AG04449 (cell line): ENCODE measurements at regions of chr11 and their contacts with region 1.

Region 1: GRCh38 chr11:8006349-8006977 is 19.3 kb downstream of the EIF3F start:
- DNase-seq: peak; percentile 21
- H3K4me3 ChIP-seq: no peak overlapping the region
- CTCF ChIP-seq: peak; percentile 89

Region 2: DNA sequence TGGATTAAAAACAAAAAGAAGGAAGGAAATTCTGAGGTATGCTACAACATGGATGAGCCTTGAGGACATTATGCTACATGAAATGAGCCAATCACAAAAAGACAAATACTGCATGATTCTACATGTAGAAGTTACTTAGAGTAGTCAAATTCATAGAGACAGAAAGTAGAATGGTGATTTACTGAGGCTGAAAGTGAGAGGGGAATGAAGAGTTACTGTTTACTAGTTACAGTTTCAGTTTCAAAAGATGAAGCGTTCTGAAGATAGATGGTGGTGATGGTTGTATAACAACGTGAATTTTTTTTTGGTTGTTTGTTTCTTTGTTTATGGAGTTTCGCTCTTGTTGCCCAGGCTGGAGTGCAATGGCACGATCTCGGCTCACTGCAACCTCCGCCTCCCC is 219.2 kb before region 1 on chr11:
- CTCF ChIA-PET with region 1: no interaction called
- POLR2A ChIA-PET with region 1: no interaction called
- DNase-seq: no peak
- H3K4me3 ChIP-seq: no peak overlapping the region
- CTCF ChIP-seq: no peak

Region 3: GRCh38 chr11:7904914-7905313 is 101.5 kb before region 1 on chr11:
- CTCF ChIA-PET with region 1: interaction called, 21 read pairs
- POLR2A ChIA-PET with region 1: no interaction called
- DNase-seq: no peak
- H3K4me3 ChIP-seq: no peak overlapping the region
- CTCF ChIP-seq: peak; percentile 28

Region 4: DNA sequence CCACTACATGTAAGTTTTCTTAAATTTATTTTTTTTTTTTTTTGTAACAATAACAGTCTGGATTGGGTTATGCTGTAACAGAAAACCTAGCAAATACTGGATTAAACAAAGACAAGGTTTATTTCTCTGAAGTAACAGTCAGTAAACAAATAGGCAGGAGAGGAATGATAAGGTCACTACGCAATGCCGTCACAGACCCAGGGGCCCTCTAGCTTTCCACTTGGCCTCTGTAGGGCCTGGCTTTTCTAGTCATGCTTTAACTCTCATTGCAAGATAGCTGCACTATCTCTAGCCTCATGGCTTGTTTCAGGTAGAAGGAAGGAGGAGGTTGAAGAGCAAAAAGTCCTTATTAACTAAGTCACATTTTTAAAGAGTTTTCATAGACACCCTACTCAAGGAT is 81.9 kb before region 1 on chr11:
- CTCF ChIA-PET with region 1: no interaction called
- POLR2A ChIA-PET with region 1: no interaction called
- DNase-seq: no peak
- H3K4me3 ChIP-seq: no peak overlapping the region
- CTCF ChIP-seq: no peak

Region 5: GRCh38 chr11:8025816-8026215 is 19.4 kb after region 1 on chr11:
- CTCF ChIA-PET with region 1: interaction called, 20 read pairs
- POLR2A ChIA-PET with region 1: no interaction called
- DNase-seq: peak; percentile 64
- H3K4me3 ChIP-seq: no peak overlapping the region
- CTCF ChIP-seq: no peak

Region 6: GRCh38 chr11:8070417-8071115 is 64.1 kb after region 1 on chr11:
- CTCF ChIA-PET with region 1: interaction called, 17 read pairs
- POLR2A ChIA-PET with region 1: interaction called, 3 read pairs
- DNase-seq: no peak
- H3K4me3 ChIP-seq: no peak overlapping the region
- CTCF ChIP-seq: peak; percentile 23

Region 7: DNA sequence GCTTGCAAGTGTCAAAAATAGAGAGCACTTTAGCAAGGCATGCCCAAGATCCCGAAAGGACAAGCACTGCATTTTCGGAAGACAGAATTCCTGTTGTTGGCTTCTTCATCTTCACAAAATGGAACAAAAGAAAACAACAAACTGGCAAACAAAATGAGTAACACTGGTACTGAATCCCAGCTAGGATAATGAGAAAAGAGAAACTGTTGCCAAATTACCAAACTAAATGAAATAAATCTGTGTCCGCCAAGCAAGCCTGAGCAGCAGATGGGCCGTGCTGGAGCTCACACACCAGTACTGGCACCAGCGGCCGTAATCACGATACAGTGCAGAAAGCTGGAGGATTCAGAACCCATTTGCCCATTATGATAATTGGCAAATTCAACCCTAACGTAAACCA is 105.2 kb after region 1 on chr11:
- CTCF ChIA-PET with region 1: interaction called, 15 read pairs
- POLR2A ChIA-PET with region 1: no interaction called
- DNase-seq: no peak
- H3K4me3 ChIP-seq: no peak overlapping the region
- CTCF ChIP-seq: no peak